ENCODE measurements at regions of chr5 and their contacts with region 1.

Region 1: DNA sequence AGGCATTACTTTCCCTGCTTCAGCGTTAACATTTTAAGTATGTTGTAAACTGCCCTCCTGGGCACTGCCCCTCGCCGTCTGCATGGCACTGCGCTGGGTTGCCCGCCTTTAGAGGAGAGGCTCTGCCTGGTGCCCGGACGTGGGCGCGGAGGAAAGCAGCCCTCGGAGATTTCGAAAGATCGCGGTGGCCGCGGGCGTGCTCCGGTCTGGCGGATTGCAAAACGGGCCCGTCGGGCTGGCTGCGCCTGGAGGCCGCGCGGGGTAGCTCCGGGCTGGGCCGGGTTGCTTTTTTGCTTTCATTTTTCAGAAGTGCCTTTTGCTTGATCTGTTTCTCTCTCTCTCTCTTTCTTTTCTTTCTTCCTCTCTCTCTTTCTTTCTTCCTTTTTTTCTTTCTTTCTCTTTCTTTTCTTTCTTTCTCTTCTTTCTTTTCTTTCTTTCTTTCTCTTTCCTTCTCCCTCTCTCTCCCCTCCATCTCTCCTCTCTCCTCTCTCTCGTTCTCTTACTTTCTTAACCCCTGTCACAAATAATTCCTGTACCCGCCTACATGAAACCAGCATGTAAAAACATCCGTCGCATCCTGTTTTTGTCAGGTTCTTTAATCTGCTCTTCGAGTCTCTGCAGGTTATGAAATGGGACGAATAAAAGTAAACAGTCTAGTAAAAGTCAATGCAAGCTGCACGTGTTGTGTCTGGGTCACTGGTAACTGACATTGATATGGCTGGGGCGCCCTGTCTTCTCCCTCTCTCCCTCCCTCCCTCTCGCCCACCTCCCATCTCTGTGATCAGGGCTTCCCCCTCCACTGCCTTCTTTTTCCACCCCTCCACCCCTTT is 1.7 kb downstream of the FST start:
- DNase-seq: peak; percentile 49 to 88 (median 74)
- ATAC-seq: peak; percentile 59 to 83 (median 72)
- H3K4me3 ChIP-seq: peak overlapping the region; percentile 16 to 93 (median 70)
- H3K27ac ChIP-seq: peak overlapping the region in 10 of 12 donors; percentile 15 to 68 (median 56)
- H3K4me1 ChIP-seq: peaks cover 0 to 38% (median 7%) of the 10 kb centered on the region in 12 donors
- H3K27me3 ChIP-seq: peaks cover 0 to 24% (median 0%) of the 10 kb centered on the region in 9 donors
- CTCF ChIP-seq: peak in 6 of 12 donors; percentile 8 to 42 (median 17)
- POLR2A ChIP-seq: no peak

Region 2: DNA sequence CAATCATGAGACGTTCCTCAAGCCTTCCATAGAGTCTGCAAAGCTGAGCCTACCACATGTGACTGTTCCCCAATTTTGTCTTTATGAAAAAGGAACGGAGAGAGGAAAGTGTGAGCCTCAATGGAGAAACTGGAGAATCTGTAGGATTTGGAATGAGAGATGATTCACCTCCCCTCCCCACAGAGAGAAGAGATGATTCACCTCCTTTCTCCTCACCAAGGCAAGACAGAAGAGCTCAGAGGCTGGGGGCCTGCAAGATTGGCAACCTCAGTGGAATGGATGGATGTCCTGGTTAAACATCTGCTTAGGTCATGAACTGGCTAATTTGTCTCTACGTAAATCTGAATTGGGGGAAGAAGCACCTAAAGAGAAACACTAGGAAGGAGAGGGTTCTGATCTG is 355.6 kb before region 1 on chr5:
- intact Hi-C with region 1: no loop called
- DNase-seq: no peak
- ATAC-seq: no peak
- H3K4me3 ChIP-seq: no peak overlapping the region
- H3K27ac ChIP-seq: no peak overlapping the region
- H3K4me1 ChIP-seq: no peaks in the 10 kb centered on the region
- H3K27me3 ChIP-seq: no peaks in the 10 kb centered on the region
- CTCF ChIP-seq: no peak
- POLR2A ChIP-seq: no peak

Region 3: DNA sequence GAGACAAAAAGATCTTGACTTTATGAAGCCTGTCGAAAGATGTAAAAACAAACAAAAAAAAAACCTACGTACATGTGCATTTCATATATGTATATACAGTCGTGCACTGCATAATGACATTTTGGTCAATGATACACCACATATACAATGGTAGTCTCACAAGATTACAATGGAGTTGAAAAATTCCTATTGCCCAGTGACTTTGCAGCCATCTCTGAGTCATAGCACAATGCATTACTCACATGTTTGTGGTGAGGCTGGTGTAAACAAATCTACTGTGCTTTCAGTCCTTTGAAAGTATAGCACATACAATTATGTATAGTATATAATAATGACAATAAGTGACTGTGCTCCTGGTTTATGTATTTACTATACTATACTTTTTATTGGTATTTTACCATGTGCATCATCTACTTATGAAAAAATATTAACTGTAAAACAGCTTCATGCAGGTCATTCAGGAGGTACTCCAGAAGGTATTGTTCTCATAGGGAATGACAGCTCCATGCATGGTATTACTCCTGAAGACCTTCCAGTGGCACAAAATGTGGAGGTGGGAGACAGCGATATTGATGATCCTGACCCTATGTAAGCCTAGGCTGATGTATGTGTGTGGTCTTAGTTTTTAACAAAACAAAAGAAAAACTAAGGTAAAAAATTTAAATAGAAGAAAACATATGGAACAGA is 75.3 kb before region 1 on chr5:
- intact Hi-C with region 1: no loop called
- DNase-seq: no peak
- ATAC-seq: no peak
- H3K4me3 ChIP-seq: no peak overlapping the region
- H3K27ac ChIP-seq: no peak overlapping the region
- H3K4me1 ChIP-seq: peaks cover 0 to 4% (median 0%) of the 10 kb centered on the region in 12 donors
- H3K27me3 ChIP-seq: no peaks in the 10 kb centered on the region
- CTCF ChIP-seq: no peak
- POLR2A ChIP-seq: no peak

Region 4: GRCh38 chr5:53560506-53561191 is 78.5 kb after region 1 on chr5 and contains the start of gene NDUFS4:
- intact Hi-C with region 1: loop called in 2 of 10 experiments (anchors 5 kb)
- DNase-seq: peak; percentile 85 to 92 (median 90)
- ATAC-seq: peak; percentile 91 to 97 (median 96)
- H3K4me3 ChIP-seq: peak within 1 kb of the TSS; percentile 66 to 92 (median 74)
- H3K27ac ChIP-seq: peak within 1 kb of the TSS; percentile 73 to 97 (median 92)
- H3K4me1 ChIP-seq: peaks cover 0 to 41% (median 26%) of the 10 kb centered on the region in 12 donors
- H3K27me3 ChIP-seq: peaks cover 0 to 4% (median 0%) of the 10 kb centered on the region in 9 donors
- CTCF ChIP-seq: peak in 1 of 12 donors; percentile 24
- POLR2A ChIP-seq: peak in 1 of 2 donors; percentile 45
- total RNA-seq, gene NDUFS4: 109 to 259 (median 185) TPM

Region 5: GRCh38 chr5:53983568-53984460 is 501.7 kb after region 1 on chr5:
- intact Hi-C with region 1: loop called in 2 of 10 experiments (anchors 10 kb)
- DNase-seq: no peak
- ATAC-seq: no peak
- H3K4me3 ChIP-seq: no peak overlapping the region
- H3K27ac ChIP-seq: no peak overlapping the region
- H3K4me1 ChIP-seq: no peaks in the 10 kb centered on the region
- H3K27me3 ChIP-seq: no peaks in the 10 kb centered on the region
- CTCF ChIP-seq: no peak
- POLR2A ChIP-seq: no peak

Region 6: DNA sequence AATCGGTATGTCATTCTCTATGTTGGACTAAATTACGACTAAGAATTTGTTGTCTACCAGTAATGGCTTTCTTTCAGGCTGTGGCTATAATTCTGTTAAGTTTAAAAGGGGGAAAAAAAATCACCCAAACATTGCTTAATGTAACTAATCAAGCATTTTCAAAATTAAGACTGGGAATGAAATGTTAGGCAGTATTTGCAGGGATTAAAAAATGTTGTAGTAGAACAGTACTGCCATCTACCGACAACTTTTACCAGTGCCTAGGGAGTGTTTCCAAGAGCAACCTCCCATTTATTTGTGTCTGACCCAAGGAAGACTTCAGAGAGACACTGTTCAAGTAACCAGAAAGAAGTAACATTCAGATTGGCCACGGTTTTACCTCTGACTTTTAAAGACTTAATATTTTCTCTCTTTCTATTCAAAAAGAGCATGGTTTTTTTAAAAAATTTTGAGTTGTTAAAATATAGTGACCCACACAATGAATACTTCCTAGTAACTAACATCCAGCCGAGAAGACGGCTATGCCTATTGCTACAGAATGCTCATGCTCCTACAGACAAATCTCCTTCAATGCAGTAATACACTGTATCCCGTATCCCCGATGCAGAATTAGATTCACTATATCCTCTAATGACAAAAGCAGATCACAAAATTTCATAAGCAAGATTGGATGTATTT is 735.9 kb after region 1 on chr5:
- intact Hi-C with region 1: loop called in 9 of 10 experiments (anchors 2 to 5 kb)
- DNase-seq: peak in 2 of 5 donors; percentile 32 to 40
- ATAC-seq: peak; percentile 71 to 89 (median 81)
- H3K4me3 ChIP-seq: no peak overlapping the region
- H3K27ac ChIP-seq: no peak overlapping the region
- H3K4me1 ChIP-seq: peaks cover 0 to 20% (median 5%) of the 10 kb centered on the region in 12 donors
- H3K27me3 ChIP-seq: no peaks in the 10 kb centered on the region
- CTCF ChIP-seq: peak; percentile 75 to 91 (median 86)
- POLR2A ChIP-seq: no peak

Region 7: GRCh38 chr5:54234304-54234933 is 752.3 kb after region 1 on chr5:
- intact Hi-C with region 1: loop called in 5 of 10 experiments (anchors 5 kb)
- DNase-seq: no peak
- ATAC-seq: no peak
- H3K4me3 ChIP-seq: peak overlapping the region in 3 of 12 donors; percentile 3 to 30 (median 16)
- H3K27ac ChIP-seq: no peak overlapping the region
- H3K4me1 ChIP-seq: peaks cover 0 to 47% (median 17%) of the 10 kb centered on the region in 12 donors
- H3K27me3 ChIP-seq: no peaks in the 10 kb centered on the region
- CTCF ChIP-seq: peak; percentile 37 to 70 (median 48)
- POLR2A ChIP-seq: no peak